Activated T-helper 1 cell treated with anti-CD3 and anti-CD28 coated beads, Interleukin-12 subunit alpha, Interleukin-12 subunit beta, Interleukin-2, Interleukin-4 antibody, amounts not matched to agents 30 ng/mL and 10 ng/mL and 1 ng/mL, durations not matched to agents 14 hours and 24 hours and 36 hours (primary cell): ENCODE measurements at regions of chr3 and their contacts with region 1.

Region 1: DNA sequence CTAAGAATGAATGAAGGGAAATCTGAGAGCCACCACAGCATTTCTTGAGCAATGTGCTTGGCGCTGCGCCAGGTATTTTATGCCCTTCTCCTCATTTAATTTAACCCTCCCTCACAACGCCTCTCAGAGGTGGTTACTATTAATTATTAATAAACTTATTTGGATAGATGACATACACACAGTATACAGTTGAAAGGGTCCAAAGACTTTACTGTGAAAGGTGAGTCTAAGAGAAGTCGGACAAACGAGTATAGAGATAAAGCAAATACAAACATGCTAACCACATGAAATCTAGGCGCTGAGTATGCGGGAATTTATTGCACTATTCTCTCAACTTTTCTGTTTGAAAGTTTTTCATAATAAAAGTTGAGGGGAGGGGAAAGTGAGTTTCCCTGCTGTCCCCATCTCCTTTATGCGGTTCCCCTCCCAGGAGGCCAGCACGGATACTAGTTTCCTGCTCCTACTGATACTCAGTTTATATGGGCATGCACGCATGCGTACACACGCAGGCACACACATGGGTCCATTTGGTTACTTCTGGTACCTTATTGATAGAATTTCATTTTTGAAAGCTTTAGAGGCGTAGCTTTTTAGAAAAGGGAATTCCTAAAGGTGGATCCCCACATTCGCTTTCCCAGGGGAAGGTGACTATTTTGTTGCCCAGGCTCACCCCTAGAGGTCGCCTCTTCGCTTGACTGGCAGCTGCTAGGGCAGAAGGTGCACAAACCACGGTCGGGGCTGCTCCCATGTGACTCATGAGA is 28.5 kb upstream of the KCTD6 start:
- DNase-seq: peak; percentile 71
- H3K4me3 Mint-ChIP-seq: no peak overlapping the region
- H3K27ac Mint-ChIP-seq: no peak overlapping the region
- H3K4me1 Mint-ChIP-seq: peaks cover 13% of the 10 kb centered on the region
- H3K27me3 Mint-ChIP-seq: peaks cover 17% of the 10 kb centered on the region

Region 2: GRCh38 chr3:58202917-58203360 is 260.4 kb before region 1 on chr3:
- intact Hi-C with region 1: no loop called
- DNase-seq: no peak
- H3K4me3 Mint-ChIP-seq: no peak overlapping the region
- H3K27ac Mint-ChIP-seq: no peak overlapping the region
- H3K4me1 Mint-ChIP-seq: peaks cover 20% of the 10 kb centered on the region
- H3K27me3 Mint-ChIP-seq: peaks cover 16% of the 10 kb centered on the region

Region 3: GRCh38 chr3:58630076-58630709 is 166.8 kb after region 1 on chr3:
- intact Hi-C with region 1: loop called (anchors 1 kb)
- DNase-seq: peak; percentile 46
- H3K4me3 Mint-ChIP-seq: no peak overlapping the region
- H3K27ac Mint-ChIP-seq: no peak overlapping the region
- H3K4me1 Mint-ChIP-seq: no peaks in the 10 kb centered on the region
- H3K27me3 Mint-ChIP-seq: no peaks in the 10 kb centered on the region

Region 4: DNA sequence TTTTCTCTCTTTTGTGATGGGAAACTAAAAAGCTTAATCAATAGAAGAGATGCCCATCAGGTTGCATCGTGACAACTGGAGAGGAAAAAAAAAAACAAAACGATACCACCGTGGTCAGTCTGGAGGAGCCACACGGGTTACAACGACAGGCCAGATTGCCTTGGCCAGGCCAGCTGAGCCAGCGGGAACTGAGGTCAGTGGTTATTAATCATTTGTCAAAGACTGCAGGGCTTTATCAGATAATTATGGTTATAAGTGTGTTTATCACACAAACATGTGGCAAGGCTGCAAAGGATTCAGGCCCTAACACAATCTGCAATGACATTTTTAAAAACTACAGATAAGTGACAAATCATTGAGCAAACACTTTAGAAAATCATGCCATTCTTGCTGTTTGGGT is 338.2 kb after region 1 on chr3:
- intact Hi-C with region 1: no loop called
- DNase-seq: no peak
- H3K4me3 Mint-ChIP-seq: no peak overlapping the region
- H3K27ac Mint-ChIP-seq: no peak overlapping the region
- H3K4me1 Mint-ChIP-seq: peaks cover 10% of the 10 kb centered on the region
- H3K27me3 Mint-ChIP-seq: no peaks in the 10 kb centered on the region